Endothelial cell of umbilical vein (primary cell): ENCODE measurements at regions of chr18 and their contacts with region 1.

Region 1: DNA sequence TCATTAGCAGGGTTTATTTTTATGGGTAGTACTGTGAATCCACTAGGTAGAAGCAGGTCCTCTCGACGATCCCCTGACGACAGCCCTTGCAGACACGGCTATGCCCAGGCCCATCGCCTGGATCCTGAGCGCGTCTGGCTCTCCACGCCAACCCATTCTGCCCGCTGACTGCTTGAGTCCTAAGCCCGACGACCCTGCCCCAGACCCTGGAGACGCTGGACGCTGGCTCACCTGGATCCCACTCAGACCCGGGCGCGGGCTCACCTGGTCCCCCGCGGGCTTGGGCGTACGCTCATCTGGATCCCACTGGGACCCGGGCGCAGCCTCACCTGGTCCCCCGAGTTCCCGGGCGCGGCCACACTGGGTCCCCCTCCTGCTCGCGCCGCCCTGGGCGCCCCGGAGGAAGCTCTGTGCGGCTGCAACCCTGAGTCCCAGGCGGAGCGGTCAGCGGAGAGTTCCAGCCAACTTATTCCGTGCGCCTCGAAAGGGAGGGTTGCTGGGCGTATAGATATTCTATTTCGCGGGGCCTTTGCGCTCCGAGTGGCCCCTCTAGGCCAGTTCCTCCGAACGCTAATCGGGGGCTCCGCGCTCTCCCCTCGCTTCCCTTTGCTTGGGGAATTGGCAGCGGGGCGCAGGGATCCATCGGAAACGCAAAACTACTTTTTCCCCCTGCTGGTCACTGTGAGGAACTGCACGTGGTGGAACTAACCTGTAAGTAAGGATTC is 22.4 kb upstream of the RMP24 start:
- DNase-seq: peak; percentile 67
- H3K4me3 ChIP-seq: peak overlapping the region; percentile 32 to 66 (median 39)
- H3K27ac ChIP-seq: no peak overlapping the region
- H3K4me1 ChIP-seq: peaks cover 3% of the 10 kb centered on the region
- H3K27me3 ChIP-seq: peaks cover 0 to 4% of the 10 kb centered on the region in 2 experiments
- CTCF ChIP-seq: peak; percentile 80 to 82
- POLR2A ChIP-seq: no peak

Region 2: DNA sequence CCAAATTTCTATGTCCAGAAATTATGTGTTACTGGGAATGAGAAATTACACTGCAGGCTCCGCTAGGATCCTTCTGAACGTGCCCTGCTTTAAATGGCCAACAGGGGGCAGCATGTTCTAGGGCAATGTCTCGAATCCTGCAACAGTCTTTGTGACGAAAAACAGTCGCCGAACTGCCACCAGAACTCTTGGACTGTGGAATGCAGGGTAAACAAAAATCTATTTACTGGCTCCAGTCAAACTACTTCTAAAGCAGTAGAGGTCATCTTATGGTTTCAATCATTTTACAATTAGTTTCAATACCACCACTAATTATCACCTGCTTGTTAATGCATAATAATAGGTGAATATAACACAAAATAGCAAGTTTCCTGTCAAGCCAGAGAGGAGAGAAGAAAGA is 719.0 kb before region 1 on chr18:
- CTCF ChIA-PET with region 1: no interaction called
- POLR2A ChIA-PET with region 1: no interaction called
- dilution Hi-C with region 1: no loop called
- intact Hi-C with region 1: loop called (anchors 10 kb)
- DNase-seq: peak; percentile 79
- H3K4me3 ChIP-seq: no peak overlapping the region
- H3K27ac ChIP-seq: no peak overlapping the region
- H3K4me1 ChIP-seq: no peaks in the 10 kb centered on the region
- H3K27me3 ChIP-seq: no peaks in the 10 kb centered on the region
- CTCF ChIP-seq: peak; percentile 78 to 82
- POLR2A ChIP-seq: no peak

Region 3: DNA sequence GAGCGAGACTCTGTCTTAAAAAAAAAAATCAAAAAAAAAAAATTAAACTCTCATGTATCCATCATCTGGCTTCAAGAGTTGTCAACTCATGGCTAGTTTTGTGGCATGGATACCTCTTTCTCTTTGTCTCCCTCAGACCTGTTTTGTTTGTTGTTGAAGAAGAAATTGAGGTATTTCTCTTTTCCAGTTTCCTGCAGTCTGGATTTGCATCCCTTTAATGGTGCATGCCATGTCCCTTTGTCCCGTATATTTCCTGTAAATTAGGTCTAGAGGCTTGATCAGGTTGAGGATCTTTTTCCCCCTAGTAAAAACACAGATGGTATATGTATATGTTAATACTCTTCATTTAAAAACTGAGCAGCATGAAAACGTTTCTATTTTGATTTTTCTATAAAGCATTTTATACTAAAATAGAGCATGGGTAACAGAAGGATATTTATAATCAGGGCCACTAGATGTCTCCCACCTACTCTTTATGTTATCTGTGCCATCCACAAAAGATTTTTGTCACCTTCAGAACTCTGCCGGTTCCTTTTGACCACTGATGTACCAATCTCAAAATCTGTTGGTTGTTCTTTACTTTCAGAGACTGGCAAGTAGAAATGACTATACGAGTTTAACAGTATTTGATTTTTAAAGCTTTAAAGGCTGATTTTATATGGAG is 288.4 kb before region 1 on chr18:
- CTCF ChIA-PET with region 1: interaction called, 5 read pairs
- POLR2A ChIA-PET with region 1: no interaction called
- dilution Hi-C with region 1: no loop called
- intact Hi-C with region 1: loop called (anchors 2 kb)
- DNase-seq: peak; percentile 47
- H3K4me3 ChIP-seq: no peak overlapping the region
- H3K27ac ChIP-seq: no peak overlapping the region
- H3K4me1 ChIP-seq: peaks cover 15% of the 10 kb centered on the region
- H3K27me3 ChIP-seq: no peaks in the 10 kb centered on the region
- CTCF ChIP-seq: no peak
- POLR2A ChIP-seq: no peak

Region 4: DNA sequence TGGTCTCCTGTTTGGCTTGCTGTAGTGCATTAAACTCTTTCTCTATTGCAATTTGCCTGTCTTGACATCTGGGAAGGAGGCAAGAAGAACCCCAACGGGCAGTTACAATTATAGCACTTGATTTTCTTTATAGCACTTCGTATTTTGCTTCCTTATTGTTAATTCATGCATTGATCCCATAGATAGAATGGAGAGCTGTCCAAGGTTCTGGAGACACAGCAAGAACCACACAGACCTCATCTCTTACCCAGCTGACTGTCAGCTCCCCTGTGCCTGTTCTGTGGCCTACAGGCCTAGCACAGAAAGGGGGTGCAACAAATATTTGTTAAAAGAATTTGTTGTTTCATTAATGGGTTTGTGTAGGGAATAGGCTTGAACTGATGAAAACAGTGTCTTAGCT is 174.2 kb before region 1 on chr18:
- CTCF ChIA-PET with region 1: interaction called, 10 read pairs
- POLR2A ChIA-PET with region 1: no interaction called
- dilution Hi-C with region 1: no loop called
- intact Hi-C with region 1: no loop called
- DNase-seq: peak; percentile 24
- H3K4me3 ChIP-seq: no peak overlapping the region
- H3K27ac ChIP-seq: no peak overlapping the region
- H3K4me1 ChIP-seq: no peaks in the 10 kb centered on the region
- H3K27me3 ChIP-seq: peaks cover 0 to 6% of the 10 kb centered on the region in 2 experiments
- CTCF ChIP-seq: no peak
- POLR2A ChIP-seq: no peak

Region 5: GRCh38 chr18:35939138-35939537 is 10.9 kb before region 1 on chr18:
- CTCF ChIA-PET with region 1: interaction called, 68 read pairs
- POLR2A ChIA-PET with region 1: no interaction called
- dilution Hi-C with region 1: no loop called
- intact Hi-C with region 1: no loop called
- DNase-seq: no peak
- H3K4me3 ChIP-seq: no peak overlapping the region
- H3K27ac ChIP-seq: no peak overlapping the region
- H3K4me1 ChIP-seq: no peaks in the 10 kb centered on the region
- H3K27me3 ChIP-seq: peaks cover 0 to 6% of the 10 kb centered on the region in 2 experiments
- CTCF ChIP-seq: peak; percentile 3 to 4
- POLR2A ChIP-seq: no peak

Region 6: GRCh38 chr18:36120300-36120778 is 170.3 kb after region 1 on chr18:
- CTCF ChIA-PET with region 1: no interaction called
- POLR2A ChIA-PET with region 1: no interaction called
- dilution Hi-C with region 1: no loop called
- intact Hi-C with region 1: no loop called
- DNase-seq: no peak
- H3K4me3 ChIP-seq: no peak overlapping the region
- H3K27ac ChIP-seq: no peak overlapping the region
- H3K4me1 ChIP-seq: no peaks in the 10 kb centered on the region
- H3K27me3 ChIP-seq: no peaks in the 10 kb centered on the region
- CTCF ChIP-seq: no peak
- POLR2A ChIP-seq: no peak

Region 7: GRCh38 chr18:36186911-36187834 is 237.1 kb after region 1 on chr18 and contains the start of gene MOCOS:
- CTCF ChIA-PET with region 1: no interaction called
- POLR2A ChIA-PET with region 1: no interaction called
- dilution Hi-C with region 1: no loop called
- intact Hi-C with region 1: no loop called
- DNase-seq: peak; percentile 39
- H3K4me3 ChIP-seq: peak within 1 kb of the TSS; percentile 49 to 79 (median 59)
- H3K27ac ChIP-seq: no peak within 1 kb of the TSS
- H3K4me1 ChIP-seq: peaks cover 4% of the 10 kb centered on the region
- H3K27me3 ChIP-seq: peaks cover 0 to 8% of the 10 kb centered on the region in 2 experiments
- CTCF ChIP-seq: no peak
- POLR2A ChIP-seq: no peak
- total RNA-seq, gene MOCOS: 0.85 and 0.88 TPM in 2 replicates